OCI-LY7 (cell line): ENCODE measurements at regions of chr17 and their contacts with region 1.

Region 1: GRCh38 chr17:74864866-74865395 is 5.2 kb upstream of the GRIN2C start:
- DNase-seq: peak; percentile 79
- H3K4me3 ChIP-seq: no peak overlapping the region
- H3K27ac ChIP-seq: no peak overlapping the region
- H3K4me1 ChIP-seq: peaks cover 18% of the 10 kb centered on the region
- CTCF ChIP-seq: peak; percentile 100

Region 2: DNA sequence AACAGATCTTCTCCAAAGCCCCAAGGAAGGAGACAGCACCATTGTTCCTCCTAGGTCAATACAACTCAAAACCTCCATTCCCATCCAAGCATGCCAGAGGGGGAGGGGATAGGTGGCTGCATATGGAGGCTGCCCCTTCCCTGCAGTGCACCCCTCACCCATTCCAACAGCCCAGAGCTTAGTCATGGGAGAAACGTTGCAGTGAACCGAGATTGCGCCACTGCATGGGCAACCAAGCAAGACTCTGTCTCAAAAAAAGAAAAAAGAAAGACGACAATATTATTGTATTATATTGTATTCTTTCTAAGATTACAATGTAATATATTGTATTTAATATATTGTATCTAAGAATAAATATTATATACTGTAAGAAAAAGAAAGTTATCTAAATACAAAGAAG is 205.0 kb before region 1 on chr17:
- CTCF ChIA-PET with region 1: no interaction called
- POLR2A ChIA-PET with region 1: no interaction called
- intact Hi-C with region 1: loop called (anchors 2 kb)
- DNase-seq: no peak
- H3K4me3 ChIP-seq: no peak overlapping the region
- H3K27ac ChIP-seq: no peak overlapping the region
- H3K4me1 ChIP-seq: no peaks in the 10 kb centered on the region
- CTCF ChIP-seq: no peak

Region 3: GRCh38 chr17:74790161-74791054 is 74.5 kb before region 1 on chr17:
- CTCF ChIA-PET with region 1: interaction called, 38 read pairs
- POLR2A ChIA-PET with region 1: interaction called, 7 read pairs
- intact Hi-C with region 1: loop called (anchors 1 kb)
- DNase-seq: no peak
- H3K4me3 ChIP-seq: no peak overlapping the region
- H3K27ac ChIP-seq: no peak overlapping the region
- H3K4me1 ChIP-seq: peaks cover 14% of the 10 kb centered on the region
- CTCF ChIP-seq: no peak

Region 4: DNA sequence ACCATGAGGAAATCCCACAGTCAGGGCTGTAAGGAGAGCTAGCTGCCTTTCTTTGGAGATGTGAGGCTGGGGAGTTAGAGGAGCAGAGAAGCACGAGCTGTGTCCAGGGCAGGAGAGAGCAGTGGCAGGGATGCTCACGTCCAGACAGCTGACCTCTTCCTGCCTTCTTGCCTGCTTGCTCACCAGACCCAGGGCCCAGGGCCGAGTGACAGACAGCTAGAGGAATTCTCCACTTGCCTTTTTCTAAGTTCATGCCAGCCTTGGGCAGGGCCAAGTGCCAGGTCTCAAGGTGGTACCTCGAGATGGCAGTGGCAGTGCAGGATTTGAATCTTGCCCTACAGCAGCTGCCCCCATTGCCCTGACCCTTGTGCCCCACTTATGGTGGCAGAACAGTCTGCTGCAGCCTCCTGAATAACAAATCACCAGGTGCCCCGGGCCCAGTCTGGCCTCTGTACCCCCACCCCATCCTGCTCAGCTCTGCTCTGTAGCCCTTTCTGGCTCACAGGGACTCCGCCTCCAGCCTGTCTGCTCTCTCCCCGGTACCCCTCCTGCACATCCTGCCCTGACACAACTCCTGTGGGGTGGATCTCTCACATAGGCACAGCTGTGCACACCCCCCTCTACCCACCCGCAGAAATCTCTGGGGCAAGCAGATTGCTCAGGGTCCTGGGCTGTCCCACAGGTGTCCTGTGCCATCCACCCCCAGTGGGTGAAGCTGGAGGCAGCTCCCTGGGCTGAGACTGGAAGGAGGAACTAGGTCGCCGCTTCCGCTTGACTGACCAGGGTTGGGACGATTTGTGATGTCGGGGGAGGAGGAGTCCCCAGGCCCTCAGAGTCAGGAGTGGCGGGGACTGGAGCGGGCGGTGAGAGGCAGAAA is 31.2 kb before region 1 on chr17:
- CTCF ChIA-PET with region 1: interaction called, 16 read pairs
- POLR2A ChIA-PET with region 1: interaction called, 4 read pairs
- intact Hi-C with region 1: loop called (anchors 1 kb)
- DNase-seq: peak; percentile 82
- H3K4me3 ChIP-seq: peak overlapping the region; percentile 35
- H3K27ac ChIP-seq: peak overlapping the region; percentile 60
- H3K4me1 ChIP-seq: peaks cover 40% of the 10 kb centered on the region
- CTCF ChIP-seq: no peak